CD4-positive, alpha-beta T cell (primary cell): ENCODE measurements at regions of chr16 and their contacts with region 1.

Region 1: GRCh38 chr16:1971796-1972489 is at the start of gene TBL3:
- DNase-seq: peak; percentile 92 to 98 (median 96)
- ATAC-seq: peak; percentile 97
- H3K4me3 ChIP-seq: peak within 1 kb of the TSS; percentile 73
- H3K4me3 Mint-ChIP-seq: peak within 1 kb of the TSS; percentile 97
- H3K27ac ChIP-seq: peak within 1 kb of the TSS; percentile 87 to 92
- H3K27ac Mint-ChIP-seq: peak within 1 kb of the TSS; percentile 97
- H3K4me1 ChIP-seq: peaks cover 36% of the 10 kb centered on the region
- H3K4me1 Mint-ChIP-seq: peaks cover 20% of the 10 kb centered on the region
- H3K27me3 ChIP-seq: no peaks in the 10 kb centered on the region
- H3K27me3 Mint-ChIP-seq: no peaks in the 10 kb centered on the region
- CTCF ChIP-seq: no peak
- total RNA-seq, gene TBL3: 12.7 to 15.5 TPM

Region 2: GRCh38 chr16:1959269-1960049 is 12.5 kb before region 1 on chr16 and contains the start of gene NDUFB10:
- CTCF ChIA-PET with region 1: no interaction called
- POLR2A ChIA-PET with region 1: interaction called, 31 read pairs
- intact Hi-C with region 1: no loop called
- DNase-seq: peak; percentile 81 to 96 (median 92)
- ATAC-seq: peak; percentile 86
- H3K4me3 ChIP-seq: peak within 1 kb of the TSS; percentile 94
- H3K4me3 Mint-ChIP-seq: peak within 1 kb of the TSS; percentile 91
- H3K27ac ChIP-seq: peak within 1 kb of the TSS; percentile 66 to 72
- H3K27ac Mint-ChIP-seq: peak within 1 kb of the TSS; percentile 98
- H3K4me1 ChIP-seq: peaks cover 55% of the 10 kb centered on the region
- H3K4me1 Mint-ChIP-seq: peaks cover 42% of the 10 kb centered on the region
- H3K27me3 ChIP-seq: no peaks in the 10 kb centered on the region
- H3K27me3 Mint-ChIP-seq: no peaks in the 10 kb centered on the region
- CTCF ChIP-seq: peak; percentile 83
- total RNA-seq, gene NDUFB10: 40.7 to 41.1 TPM

Region 3: GRCh38 chr16:1983544-1984346 is 11.8 kb after region 1 on chr16 and contains the start of gene GFER:
- CTCF ChIA-PET with region 1: interaction called, 3 read pairs
- POLR2A ChIA-PET with region 1: interaction called, 23 read pairs
- intact Hi-C with region 1: no loop called
- DNase-seq: peak in 10 of 14 experiments; percentile 48 to 87 (median 60)
- ATAC-seq: peak; percentile 60
- H3K4me3 ChIP-seq: peak within 1 kb of the TSS; percentile 65
- H3K4me3 Mint-ChIP-seq: peak within 1 kb of the TSS; percentile 87
- H3K27ac ChIP-seq: no peak within 1 kb of the TSS
- H3K27ac Mint-ChIP-seq: peak within 1 kb of the TSS; percentile 56
- H3K4me1 ChIP-seq: peaks cover 47% of the 10 kb centered on the region
- H3K4me1 Mint-ChIP-seq: peaks cover 23% of the 10 kb centered on the region
- H3K27me3 ChIP-seq: peaks cover 29 to 31% of the 10 kb centered on the region in 2 experiments
- H3K27me3 Mint-ChIP-seq: peaks cover 42% of the 10 kb centered on the region
- CTCF ChIP-seq: peak; percentile 14
- total RNA-seq, gene GFER: 14.5 TPM

Region 4: DNA sequence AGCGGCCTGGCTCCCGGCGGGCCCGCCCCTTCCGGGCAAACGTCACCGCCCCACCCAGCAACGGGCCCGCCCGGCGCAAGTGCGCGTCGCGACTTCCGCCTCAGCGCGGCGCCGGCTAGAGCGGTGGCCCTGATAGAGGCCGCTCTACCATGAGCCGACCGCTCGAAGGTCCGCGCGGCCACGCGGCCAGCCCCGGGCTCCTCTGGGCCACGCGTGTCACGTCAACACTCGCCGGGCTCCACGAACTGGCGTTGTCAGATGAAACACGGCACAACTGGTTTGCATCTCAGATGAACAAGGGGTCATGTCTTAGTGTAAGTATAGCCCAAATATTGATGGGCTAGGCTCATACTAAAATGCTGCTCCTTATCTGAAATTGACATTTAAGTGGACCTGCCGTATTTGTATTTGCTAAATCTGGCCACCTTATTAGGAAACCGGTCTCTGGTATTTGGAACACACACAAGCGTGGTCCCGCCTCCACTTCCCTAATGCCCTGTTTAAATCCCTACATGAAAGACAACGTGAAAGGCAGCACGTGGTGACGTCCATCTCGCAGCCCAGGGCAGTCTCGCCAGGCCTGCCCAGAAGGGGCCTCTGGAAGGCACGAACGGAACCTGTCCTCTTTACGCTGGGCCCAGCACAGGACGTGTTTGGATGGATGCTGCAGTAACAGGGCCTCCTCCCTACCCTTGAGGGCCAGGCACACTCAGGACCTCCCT is 38.0 kb after region 1 on chr16 and contains the start of gene ZNF598:
- CTCF ChIA-PET with region 1: no interaction called
- POLR2A ChIA-PET with region 1: interaction called, 4 read pairs
- intact Hi-C with region 1: loop called in 1 of 2 experiments (anchors 5 kb)
- DNase-seq: peak; percentile 47 to 93 (median 75)
- ATAC-seq: peak; percentile 91
- H3K4me3 ChIP-seq: peak within 1 kb of the TSS; percentile 68
- H3K4me3 Mint-ChIP-seq: peak within 1 kb of the TSS; percentile 93
- H3K27ac ChIP-seq: peak within 1 kb of the TSS; percentile 78 to 89
- H3K27ac Mint-ChIP-seq: peak within 1 kb of the TSS; percentile 92
- H3K4me1 ChIP-seq: peaks cover 52% of the 10 kb centered on the region
- H3K4me1 Mint-ChIP-seq: peaks cover 40% of the 10 kb centered on the region
- H3K27me3 ChIP-seq: no peaks in the 10 kb centered on the region
- H3K27me3 Mint-ChIP-seq: no peaks in the 10 kb centered on the region
- CTCF ChIP-seq: no peak
- total RNA-seq, gene ZNF598: 39.7 to 43.6 TPM